ENCODE measurements at regions of chr17 and their contacts with region 1.

Region 1: DNA sequence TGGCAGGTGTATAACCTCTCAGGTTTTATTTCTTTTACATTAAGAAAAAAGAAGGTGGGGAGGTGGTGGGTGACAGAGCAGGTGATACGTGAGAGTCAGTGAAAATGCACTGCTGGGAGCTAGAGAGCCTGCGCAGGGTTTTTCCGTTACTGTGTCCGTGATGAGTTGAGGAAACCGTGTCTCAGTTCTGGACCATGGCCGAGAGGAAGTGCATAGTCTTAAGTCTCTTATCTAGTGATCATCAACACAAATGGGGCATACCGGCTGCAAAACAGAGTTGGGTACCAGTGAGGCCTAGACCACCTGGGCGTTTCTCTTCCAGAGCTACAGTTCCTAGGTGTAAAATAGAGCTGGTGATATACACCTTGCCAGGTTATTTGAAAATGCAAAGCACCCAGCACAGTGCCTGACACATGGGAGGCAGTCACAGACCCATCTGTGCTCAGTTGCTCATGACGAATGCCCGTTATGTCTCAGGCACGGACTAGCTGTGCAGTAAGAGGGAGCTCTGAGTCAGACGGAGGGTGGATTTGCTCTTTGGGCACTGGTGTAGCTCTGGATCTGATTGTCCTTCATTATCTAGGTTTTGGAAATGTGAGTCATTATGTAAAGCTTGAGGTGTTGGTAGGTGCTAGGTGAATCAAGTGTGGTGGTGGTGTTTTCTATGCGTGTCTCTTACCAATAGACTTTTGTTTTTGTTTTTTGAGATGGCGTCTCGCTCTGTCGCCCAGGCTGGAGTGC is 60.9 kb downstream of the RPTOR start:
- DNase-seq: peak; percentile 88
- H3K4me3 Mint-ChIP-seq: peak overlapping the region; percentile 10
- H3K27ac Mint-ChIP-seq: peak overlapping the region; percentile 79
- H3K4me1 Mint-ChIP-seq: peaks cover 60% of the 10 kb centered on the region
- H3K27me3 Mint-ChIP-seq: no peaks in the 10 kb centered on the region

Region 2: DNA sequence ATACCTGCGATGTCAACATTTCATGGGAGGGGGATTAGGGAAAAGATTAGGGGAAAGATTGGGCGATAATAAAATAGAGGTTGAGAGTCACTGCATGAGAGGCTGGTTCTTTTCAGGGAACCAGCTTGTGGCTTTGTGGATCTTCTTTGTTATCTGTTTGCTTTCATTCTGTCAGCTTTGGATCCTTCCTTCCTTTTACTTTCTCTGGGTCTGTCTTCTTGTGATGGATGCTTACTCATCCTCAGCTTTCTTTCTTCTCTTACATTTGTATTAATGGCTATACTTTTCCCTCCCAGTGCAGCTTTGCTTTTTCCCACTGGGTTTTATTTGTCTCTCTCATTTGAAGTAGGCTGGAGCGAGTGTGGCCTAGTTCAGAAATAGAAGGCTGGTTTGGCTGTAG is 13.7 kb before region 1 on chr17:
- CTCF ChIA-PET with region 1: interaction called, 6 read pairs
- POLR2A ChIA-PET with region 1: interaction called, 5 read pairs
- intact Hi-C with region 1: loop called (anchors 2 kb)
- DNase-seq: no peak
- H3K4me3 Mint-ChIP-seq: no peak overlapping the region
- H3K27ac Mint-ChIP-seq: peak overlapping the region; percentile 53
- H3K4me1 Mint-ChIP-seq: peaks cover 55% of the 10 kb centered on the region
- H3K27me3 Mint-ChIP-seq: no peaks in the 10 kb centered on the region

Region 3: GRCh38 chr17:80649678-80650672 is 44.5 kb after region 1 on chr17:
- CTCF ChIA-PET with region 1: interaction called, 9 read pairs
- POLR2A ChIA-PET with region 1: interaction called, 4 read pairs
- intact Hi-C with region 1: loop called (anchors 1 kb)
- DNase-seq: peak; percentile 91
- H3K4me3 Mint-ChIP-seq: no peak overlapping the region
- H3K27ac Mint-ChIP-seq: peak overlapping the region; percentile 69
- H3K4me1 Mint-ChIP-seq: peaks cover 70% of the 10 kb centered on the region
- H3K27me3 Mint-ChIP-seq: no peaks in the 10 kb centered on the region

Region 4: GRCh38 chr17:80663781-80664206 is 58.3 kb after region 1 on chr17:
- CTCF ChIA-PET with region 1: no interaction called
- POLR2A ChIA-PET with region 1: no interaction called
- intact Hi-C with region 1: loop called (anchors 5 kb)
- DNase-seq: peak; percentile 62
- H3K4me3 Mint-ChIP-seq: no peak overlapping the region
- H3K27ac Mint-ChIP-seq: peak overlapping the region; percentile 60
- H3K4me1 Mint-ChIP-seq: peaks cover 58% of the 10 kb centered on the region
- H3K27me3 Mint-ChIP-seq: no peaks in the 10 kb centered on the region

Region 5: DNA sequence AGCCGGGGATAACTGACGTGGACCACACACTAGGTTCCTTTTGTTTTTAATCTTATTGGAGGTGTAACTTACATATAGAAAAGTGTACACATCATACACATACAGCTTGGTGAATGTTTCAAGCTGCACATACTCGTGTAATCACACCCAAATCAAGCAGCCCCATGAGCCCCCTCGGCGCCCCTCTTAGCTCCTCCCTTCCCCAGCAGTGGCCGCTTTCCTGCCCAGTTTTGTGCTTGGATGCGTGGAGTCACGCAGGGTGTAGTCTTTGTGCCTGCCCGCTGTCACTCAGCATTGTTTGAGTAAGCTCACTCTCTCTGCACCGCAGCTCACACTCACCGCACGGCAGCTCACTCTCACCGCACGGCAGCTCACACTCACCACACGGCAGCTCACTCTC is 234.5 kb after region 1 on chr17:
- CTCF ChIA-PET with region 1: no interaction called
- POLR2A ChIA-PET with region 1: no interaction called
- intact Hi-C with region 1: no loop called
- DNase-seq: no peak
- H3K4me3 Mint-ChIP-seq: no peak overlapping the region
- H3K27ac Mint-ChIP-seq: no peak overlapping the region
- H3K4me1 Mint-ChIP-seq: no peaks in the 10 kb centered on the region
- H3K27me3 Mint-ChIP-seq: no peaks in the 10 kb centered on the region

Region 6: GRCh38 chr17:80876950-80877728 is 271.6 kb after region 1 on chr17:
- CTCF ChIA-PET with region 1: no interaction called
- POLR2A ChIA-PET with region 1: interaction called, 3 read pairs
- intact Hi-C with region 1: loop called (anchors 1 kb)
- DNase-seq: peak; percentile 89
- H3K4me3 Mint-ChIP-seq: peak overlapping the region; percentile 70
- H3K27ac Mint-ChIP-seq: peak overlapping the region; percentile 98
- H3K4me1 Mint-ChIP-seq: peaks cover 49% of the 10 kb centered on the region
- H3K27me3 Mint-ChIP-seq: no peaks in the 10 kb centered on the region

Measured in activated CD4-positive, alpha-beta memory T cell treated with anti-CD3 and anti-CD28 coated beads for 36 hours (primary cell).